Activated CD4-positive, alpha-beta T cell treated with anti-CD3 and anti-CD28 coated beads, Interleukin-2, amount 10 ng/mL, durations not matched to agents 24 days and 14 days (primary cell): ENCODE measurements at regions of chr3 and their contacts with region 1.

Region 1: DNA sequence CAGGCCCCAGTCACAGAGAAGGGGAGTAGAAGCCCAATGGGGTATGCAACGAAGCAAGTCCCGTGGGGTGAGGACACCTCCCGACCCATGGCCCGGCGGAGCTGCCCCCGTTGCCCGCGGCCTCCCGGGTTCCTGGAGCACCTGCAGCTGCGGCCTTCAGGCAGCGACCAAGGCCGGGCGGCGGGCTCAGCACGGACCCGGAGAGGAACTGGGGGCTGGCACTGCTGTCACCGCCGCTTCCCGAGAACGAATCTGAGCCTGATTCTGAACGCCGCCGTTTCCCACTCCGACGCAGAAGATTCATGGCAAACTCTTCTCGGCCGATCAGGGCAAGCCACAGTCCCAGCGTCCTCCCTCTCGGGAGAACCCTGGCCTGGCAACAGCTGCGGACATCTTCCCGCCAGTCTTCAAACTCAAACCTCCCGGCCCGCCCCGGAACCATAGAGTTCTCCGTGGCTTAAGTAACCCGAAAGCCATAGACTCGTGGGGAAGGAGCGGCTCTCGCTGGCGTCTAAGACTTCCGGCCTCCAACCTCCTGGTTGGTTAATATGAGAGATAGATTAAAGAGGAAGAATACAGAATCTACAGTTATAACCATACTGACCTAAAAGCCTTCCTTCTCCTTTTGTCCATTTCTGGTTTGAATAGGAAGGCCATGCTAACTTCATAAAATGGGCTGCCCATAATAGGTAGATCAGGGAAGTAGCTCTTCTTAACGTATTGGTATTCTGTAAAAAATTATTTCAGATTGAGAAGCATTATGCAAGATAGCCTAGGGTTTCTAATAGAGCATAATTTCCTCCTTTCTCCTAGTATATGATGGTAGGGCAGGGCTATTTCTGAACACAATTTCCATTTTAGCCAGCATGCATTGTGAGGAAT is at the start of gene POLQ:
- DNase-seq: peak; percentile 96
- H3K4me3 Mint-ChIP-seq: peak within 1 kb of the TSS; percentile 99
- H3K27ac Mint-ChIP-seq: peak within 1 kb of the TSS; percentile 99
- H3K4me1 Mint-ChIP-seq: peaks cover 30% of the 10 kb centered on the region
- H3K27me3 Mint-ChIP-seq: no peaks in the 10 kb centered on the region
- total RNA-seq, gene POLQ: 30.3 and 31.0 TPM in 2 replicates

Region 2: GRCh38 chr3:121749276-121750086 is 203.7 kb after region 1 on chr3 and contains the start of gene GOLGB1:
- intact Hi-C with region 1: loop called (anchors 1 kb)
- DNase-seq: peak; percentile 97
- H3K4me3 Mint-ChIP-seq: no peak within 1 kb of the TSS
- H3K27ac Mint-ChIP-seq: no peak within 1 kb of the TSS
- H3K4me1 Mint-ChIP-seq: peaks cover 9% of the 10 kb centered on the region
- H3K27me3 Mint-ChIP-seq: peaks cover 20% of the 10 kb centered on the region
- total RNA-seq, gene GOLGB1: 21.0 and 22.2 TPM in 2 replicates

Region 3: DNA sequence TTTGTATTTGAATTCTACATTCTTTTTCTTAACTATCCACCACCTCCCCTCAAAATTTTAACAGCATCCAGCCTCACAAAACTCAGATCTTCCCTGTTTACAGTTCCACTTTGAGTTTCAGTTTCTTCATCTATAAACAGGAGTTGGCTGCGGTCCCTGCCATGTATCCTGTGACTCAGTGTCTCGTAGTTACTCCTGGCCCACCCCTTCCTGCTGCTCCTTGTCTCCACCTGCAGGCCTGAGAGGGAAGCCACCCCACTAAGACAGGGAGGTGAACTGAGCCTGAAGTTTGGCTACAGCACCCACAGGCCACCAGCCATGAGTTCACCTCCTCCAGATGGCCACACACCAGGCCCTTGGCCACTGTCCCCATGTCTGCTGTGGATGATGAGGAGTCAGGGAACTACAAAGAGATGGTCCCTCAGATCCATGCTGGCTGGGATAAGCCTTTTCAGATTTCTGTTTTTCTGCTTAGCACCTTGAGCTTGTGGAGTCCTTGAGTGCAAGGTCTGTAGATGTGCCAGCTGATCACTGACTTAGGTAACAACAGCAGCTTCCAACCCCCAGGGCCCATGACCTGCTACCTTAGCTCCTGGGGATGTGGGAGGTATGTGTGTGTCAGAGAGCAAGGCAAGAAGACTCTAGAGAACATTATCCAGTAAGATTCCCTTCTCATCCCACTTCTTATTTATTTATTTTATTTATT is 546.8 kb after region 1 on chr3:
- intact Hi-C with region 1: loop called (anchors 1 kb)
- DNase-seq: peak; percentile 85
- H3K4me3 Mint-ChIP-seq: peak overlapping the region; percentile 27
- H3K27ac Mint-ChIP-seq: peak overlapping the region; percentile 77
- H3K4me1 Mint-ChIP-seq: peaks cover 28% of the 10 kb centered on the region
- H3K27me3 Mint-ChIP-seq: no peaks in the 10 kb centered on the region

Region 4: GRCh38 chr3:122299872-122300460 is 754.2 kb after region 1 on chr3:
- intact Hi-C with region 1: loop called (anchors 1 kb)
- DNase-seq: peak; percentile 84
- H3K4me3 Mint-ChIP-seq: no peak overlapping the region
- H3K27ac Mint-ChIP-seq: no peak overlapping the region
- H3K4me1 Mint-ChIP-seq: peaks cover 21% of the 10 kb centered on the region
- H3K27me3 Mint-ChIP-seq: no peaks in the 10 kb centered on the region

Region 5: DNA sequence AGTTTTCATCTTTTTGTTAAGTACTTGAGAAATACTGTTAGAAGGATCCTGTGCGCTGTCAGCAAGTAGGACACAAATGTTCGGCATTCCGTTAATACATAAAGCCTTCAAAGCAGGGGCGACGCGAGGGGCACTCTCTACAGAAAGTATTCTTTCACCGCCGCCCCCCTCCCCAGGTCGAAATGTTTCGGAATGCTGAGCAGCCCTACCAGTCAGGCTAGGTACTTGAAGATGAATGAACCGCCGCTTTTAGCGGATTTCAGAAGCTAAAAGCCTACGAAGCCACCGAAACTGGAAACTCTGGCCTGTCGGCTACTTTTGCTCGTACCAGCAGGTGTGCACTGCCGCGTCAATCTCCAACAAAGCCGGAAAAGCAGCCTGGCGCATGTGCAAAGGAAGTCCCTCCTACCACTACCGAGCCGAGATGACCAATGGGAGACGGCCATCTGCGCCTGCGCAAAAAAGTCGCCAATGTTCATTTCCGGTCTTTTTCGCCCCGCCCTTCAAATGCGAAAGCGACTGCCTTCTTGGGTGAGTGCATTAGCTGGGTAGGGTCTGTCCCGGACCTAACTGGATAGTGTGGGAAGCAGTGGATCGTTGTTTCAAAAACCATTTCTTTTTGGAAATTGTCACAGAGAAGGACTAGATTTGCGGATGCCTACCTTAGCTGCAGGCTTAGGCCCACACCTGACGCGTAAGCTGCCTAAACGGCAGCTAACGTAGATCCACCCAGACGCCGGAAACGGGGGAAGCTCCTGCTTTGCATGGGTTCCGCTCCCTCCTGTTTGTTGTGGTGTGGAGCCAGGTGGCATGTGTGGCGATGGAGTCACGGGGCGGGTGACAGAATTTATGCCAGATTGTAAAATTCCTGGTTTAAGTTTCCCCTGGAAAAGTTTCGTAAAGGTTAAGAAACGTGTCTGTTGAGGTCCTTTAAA is 870.2 kb after region 1 on chr3 and contains the start of gene WDR5B:
- intact Hi-C with region 1: loop called (anchors 1 kb)
- DNase-seq: peak; percentile 99
- H3K4me3 Mint-ChIP-seq: peak within 1 kb of the TSS; percentile 98
- H3K27ac Mint-ChIP-seq: peak within 1 kb of the TSS; percentile 99
- H3K4me1 Mint-ChIP-seq: peaks cover 38% of the 10 kb centered on the region
- H3K27me3 Mint-ChIP-seq: peaks cover 3% of the 10 kb centered on the region
- total RNA-seq, gene WDR5B: 4.8 and 4.9 TPM in 2 replicates

Region 6: DNA sequence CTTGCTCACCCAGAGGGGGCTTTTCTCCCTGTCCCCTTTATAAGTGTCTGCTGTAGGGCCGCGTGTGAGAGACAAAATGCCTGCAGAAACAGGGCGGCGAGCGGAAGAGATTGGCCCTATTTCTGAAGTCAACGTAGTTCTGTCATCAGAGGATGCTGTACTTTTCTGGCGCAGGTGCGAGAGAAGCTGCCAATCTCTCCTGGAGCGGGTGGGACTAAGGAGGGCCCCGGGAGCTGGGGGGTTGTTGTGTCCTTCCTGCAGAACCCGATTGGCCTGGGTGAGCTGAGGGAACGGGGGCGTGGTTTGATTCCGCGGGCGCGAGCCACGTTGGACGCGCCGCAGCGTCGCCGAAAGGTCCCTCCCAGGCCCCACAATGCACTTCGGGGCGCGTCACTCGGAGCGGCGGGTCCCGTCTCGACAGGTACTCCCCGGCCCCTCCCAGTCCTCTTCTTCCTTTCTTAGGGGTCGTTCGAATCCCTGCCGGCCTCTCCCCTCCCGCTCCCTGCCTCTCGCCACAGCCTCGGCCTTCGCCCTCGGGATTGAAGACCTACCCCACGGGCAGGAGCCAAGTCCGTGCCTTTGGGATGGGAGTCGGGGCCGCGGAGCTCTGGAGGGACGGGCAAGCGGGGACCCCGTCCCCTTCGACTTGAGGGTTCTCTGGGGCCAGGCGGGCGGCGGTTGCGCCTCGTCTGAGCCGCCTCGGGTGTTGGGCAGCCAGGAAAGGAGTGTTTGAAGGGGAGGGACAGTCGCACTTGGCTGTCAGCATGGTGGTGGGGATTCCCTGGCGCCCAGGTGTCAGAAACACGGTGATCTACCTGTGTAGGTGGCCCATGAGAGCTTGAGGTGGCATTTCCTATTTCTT is 1656.0 kb after region 1 on chr3 and contains the start of gene SEC22A:
- intact Hi-C with region 1: loop called (anchors 2 kb)
- DNase-seq: peak; percentile 99
- H3K4me3 Mint-ChIP-seq: peak within 1 kb of the TSS; percentile 93
- H3K27ac Mint-ChIP-seq: peak within 1 kb of the TSS; percentile 97
- H3K4me1 Mint-ChIP-seq: peaks cover 14% of the 10 kb centered on the region
- H3K27me3 Mint-ChIP-seq: peaks cover 4% of the 10 kb centered on the region
- total RNA-seq, gene SEC22A: 16.3 and 18.7 TPM in 2 replicates